Prostate gland (tissue), 2 donors: ENCODE measurements at regions of chr5 and their contacts with region 1.

Region 1: GRCh38 chr5:178304761-178305645 is 72.4 kb upstream of the PHYKPL start:
- DNase-seq: peak; percentile 55
- H3K4me3 ChIP-seq: no peak overlapping the region
- H3K27ac ChIP-seq: peak overlapping the region; percentile 65 to 66
- H3K4me1 ChIP-seq: no peaks in the 10 kb centered on the region
- H3K27me3 ChIP-seq: no peaks in the 10 kb centered on the region
- CTCF ChIP-seq: no peak
- POLR2A ChIP-seq: no peak

Region 2: DNA sequence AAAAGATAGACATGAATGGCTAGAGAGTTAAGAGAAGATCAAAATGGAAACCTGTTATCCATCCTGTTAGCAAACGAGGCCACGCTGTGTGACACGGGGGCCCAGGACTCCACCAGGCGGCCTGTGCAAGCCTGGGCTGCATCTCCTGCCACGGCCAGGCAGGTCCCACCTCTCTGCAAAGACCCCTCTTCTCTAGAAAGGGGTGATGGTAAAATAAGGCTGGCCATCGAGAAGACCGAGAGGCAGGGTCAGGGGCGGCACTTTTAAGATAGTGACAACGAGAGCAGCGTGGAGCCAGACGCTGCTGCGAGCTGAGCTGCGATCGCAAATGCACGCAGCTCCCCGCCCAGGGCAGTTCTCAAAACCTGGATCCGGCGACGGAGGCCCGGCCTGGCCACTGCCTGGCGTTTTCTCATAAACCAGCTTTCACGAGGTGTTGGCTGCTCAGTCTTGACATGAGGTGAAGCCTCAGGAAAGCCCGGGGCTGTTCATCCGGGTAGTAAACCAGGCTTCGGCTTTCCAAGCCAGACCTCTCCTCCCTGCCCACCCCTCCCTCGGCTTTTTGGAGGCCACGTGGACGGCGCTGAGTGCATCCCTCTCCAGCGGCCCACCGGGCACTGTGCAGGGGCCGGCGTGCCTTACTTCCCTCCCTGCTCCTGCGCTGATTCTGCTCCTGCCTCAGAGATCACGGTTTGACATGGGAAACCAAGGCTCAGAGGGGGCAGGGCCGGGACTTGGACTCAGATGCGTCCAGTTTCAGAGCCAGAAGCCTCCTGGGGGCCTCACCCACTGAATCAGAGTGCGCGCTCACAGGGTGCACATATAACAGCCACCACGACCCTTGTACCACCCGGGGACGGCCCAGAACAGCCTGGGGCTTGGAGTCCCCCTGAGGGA is 79.2 kb after region 1 on chr5:
- intact Hi-C with region 1: loop called (anchors 5 kb)
- DNase-seq: peak; percentile 68
- H3K4me3 ChIP-seq: no peak overlapping the region
- H3K27ac ChIP-seq: no peak overlapping the region
- H3K4me1 ChIP-seq: no peaks in the 10 kb centered on the region
- H3K27me3 ChIP-seq: no peaks in the 10 kb centered on the region
- CTCF ChIP-seq: no peak
- POLR2A ChIP-seq: no peak